B cell (primary cell): ENCODE measurements at regions of chr6 and their contacts with region 1.

Region 1: GRCh38 chr6:25962149-25963127 is at the start of gene TRIM38:
- DNase-seq: peak; percentile 95
- ATAC-seq: peak; percentile 84
- H3K4me3 ChIP-seq: peak within 1 kb of the TSS; percentile 83 to 95 (median 92)
- H3K4me3 Mint-ChIP-seq: peak within 1 kb of the TSS; percentile 97
- H3K27ac ChIP-seq: peak within 1 kb of the TSS; percentile 94 to 97
- H3K27ac Mint-ChIP-seq: peak within 1 kb of the TSS; percentile 98
- H3K4me1 ChIP-seq: peaks cover 74 to 75% of the 10 kb centered on the region in 2 donors
- H3K4me1 Mint-ChIP-seq: peaks cover 78% of the 10 kb centered on the region
- H3K27me3 ChIP-seq: no peaks in the 10 kb centered on the region
- H3K27me3 Mint-ChIP-seq: no peaks in the 10 kb centered on the region
- CTCF ChIP-seq: no peak
- total RNA-seq, gene TRIM38: 57.2 and 57.5 TPM in 2 replicates

Region 2: GRCh38 chr6:25147223-25147622 is 815.2 kb before region 1 on chr6:
- CTCF ChIA-PET with region 1: no interaction called
- POLR2A ChIA-PET with region 1: no interaction called
- intact Hi-C with region 1: loop called (anchors 5 kb)
- DNase-seq: peak; percentile 55
- ATAC-seq: peak; percentile 88
- H3K4me3 ChIP-seq: no peak overlapping the region
- H3K4me3 Mint-ChIP-seq: peak overlapping the region; percentile 41
- H3K27ac ChIP-seq: no peak overlapping the region
- H3K27ac Mint-ChIP-seq: peak overlapping the region; percentile 41
- H3K4me1 ChIP-seq: peaks cover 6 to 16% of the 10 kb centered on the region in 2 donors
- H3K4me1 Mint-ChIP-seq: peaks cover 22% of the 10 kb centered on the region
- H3K27me3 ChIP-seq: no peaks in the 10 kb centered on the region
- H3K27me3 Mint-ChIP-seq: no peaks in the 10 kb centered on the region
- CTCF ChIP-seq: no peak

Region 3: DNA sequence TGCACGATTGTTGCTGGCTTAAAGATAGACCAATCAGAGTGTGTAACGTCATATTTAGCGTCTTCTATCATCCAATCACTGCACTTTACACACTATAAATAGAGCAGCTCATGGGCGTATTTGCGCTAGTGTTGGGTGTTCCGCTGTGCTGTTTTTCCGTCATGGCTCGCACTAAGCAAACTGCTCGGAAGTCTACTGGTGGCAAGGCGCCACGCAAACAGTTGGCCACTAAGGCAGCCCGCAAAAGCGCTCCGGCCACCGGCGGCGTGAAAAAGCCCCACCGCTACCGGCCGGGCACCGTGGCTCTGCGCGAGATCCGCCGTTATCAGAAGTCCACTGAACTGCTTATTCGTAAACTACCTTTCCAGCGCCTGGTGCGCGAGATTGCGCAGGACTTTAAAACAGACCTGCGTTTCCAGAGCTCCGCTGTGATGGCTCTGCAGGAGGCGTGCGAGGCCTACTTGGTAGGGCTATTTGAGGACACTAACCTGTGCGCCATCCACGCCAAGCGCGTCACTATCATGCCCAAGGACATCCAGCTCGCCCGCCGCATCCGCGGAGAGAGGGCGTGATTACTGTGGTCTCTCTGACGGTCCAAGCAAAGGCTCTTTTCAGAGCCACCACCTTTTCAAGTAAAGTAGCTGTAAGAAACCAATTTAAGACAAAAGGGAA is 58.0 kb after region 1 on chr6:
- CTCF ChIA-PET with region 1: interaction called, 6 read pairs
- POLR2A ChIA-PET with region 1: interaction called, 5 read pairs
- intact Hi-C with region 1: loop called (anchors 1 kb)
- DNase-seq: peak; percentile 95
- ATAC-seq: peak; percentile 53
- H3K4me3 ChIP-seq: peak overlapping the region; percentile 81 to 92 (median 88)
- H3K4me3 Mint-ChIP-seq: peak overlapping the region; percentile 99
- H3K27ac ChIP-seq: peak overlapping the region; percentile 94 to 99
- H3K27ac Mint-ChIP-seq: peak overlapping the region; percentile 100
- H3K4me1 ChIP-seq: peaks cover 9 to 24% of the 10 kb centered on the region in 2 donors
- H3K4me1 Mint-ChIP-seq: peaks cover 34% of the 10 kb centered on the region
- H3K27me3 ChIP-seq: no peaks in the 10 kb centered on the region
- H3K27me3 Mint-ChIP-seq: no peaks in the 10 kb centered on the region
- CTCF ChIP-seq: no peak